ENCODE measurements at regions of chr9 and their contacts with region 1.

Region 1: DNA sequence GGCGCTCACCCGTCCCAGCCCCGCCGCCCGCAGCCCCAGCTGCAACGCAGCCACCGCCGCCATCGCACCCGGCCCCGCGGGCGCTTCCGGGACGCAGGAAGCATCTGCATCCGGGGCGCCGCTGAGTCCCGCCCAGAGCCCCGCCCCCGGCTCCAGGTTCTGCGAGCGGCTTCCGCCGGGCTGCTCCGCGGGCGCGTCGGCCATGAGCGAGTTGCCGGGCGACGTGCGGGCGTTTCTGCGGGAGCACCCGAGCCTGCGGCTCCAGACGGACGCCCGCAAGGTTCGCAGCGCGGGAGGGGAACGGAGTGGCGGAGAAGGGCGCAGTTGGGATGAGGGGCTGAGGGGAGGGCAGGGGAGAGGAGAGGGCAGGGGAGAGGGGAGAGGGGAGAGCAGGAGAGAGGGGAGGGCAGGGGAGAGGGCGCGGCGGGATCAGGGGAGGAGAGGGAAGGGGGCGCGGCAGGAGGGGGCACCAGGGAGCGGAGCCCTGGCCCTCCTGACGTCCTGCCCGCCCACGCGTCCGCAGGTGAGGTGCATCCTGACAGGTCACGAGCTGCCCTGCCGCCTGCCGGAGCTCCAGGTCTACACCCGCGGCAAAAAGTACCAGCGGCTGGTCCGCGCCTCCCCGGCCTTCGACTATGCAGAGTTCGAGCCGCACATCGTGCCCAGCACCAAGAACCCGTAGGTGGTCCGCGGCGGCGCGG is at the starts of genes SURF1 and SURF2:
- DNase-seq: peak; percentile 94
- H3K27ac ChIP-seq: peak within 1 kb of the TSS; percentile 75
- CTCF ChIP-seq: peak; percentile 28

Region 2: GRCh38 chr9:133342069-133342406 is 14.5 kb before region 1 on chr9:
- CTCF ChIA-PET with region 1: interaction called, 11 read pairs
- POLR2A ChIA-PET with region 1: no interaction called
- DNase-seq: no peak
- H3K27ac ChIP-seq: peak overlapping the region; percentile 21
- CTCF ChIP-seq: no peak

Region 3: GRCh38 chr9:133403766-133404439 is 47.4 kb after region 1 on chr9:
- CTCF ChIA-PET with region 1: interaction called, 11 read pairs
- POLR2A ChIA-PET with region 1: no interaction called
- DNase-seq: peak; percentile 75
- H3K27ac ChIP-seq: peak overlapping the region; percentile 30
- CTCF ChIP-seq: peak; percentile 68